K562 (cell line): ENCODE measurements at regions of chr1 and their contacts with region 1.

Region 1: DNA sequence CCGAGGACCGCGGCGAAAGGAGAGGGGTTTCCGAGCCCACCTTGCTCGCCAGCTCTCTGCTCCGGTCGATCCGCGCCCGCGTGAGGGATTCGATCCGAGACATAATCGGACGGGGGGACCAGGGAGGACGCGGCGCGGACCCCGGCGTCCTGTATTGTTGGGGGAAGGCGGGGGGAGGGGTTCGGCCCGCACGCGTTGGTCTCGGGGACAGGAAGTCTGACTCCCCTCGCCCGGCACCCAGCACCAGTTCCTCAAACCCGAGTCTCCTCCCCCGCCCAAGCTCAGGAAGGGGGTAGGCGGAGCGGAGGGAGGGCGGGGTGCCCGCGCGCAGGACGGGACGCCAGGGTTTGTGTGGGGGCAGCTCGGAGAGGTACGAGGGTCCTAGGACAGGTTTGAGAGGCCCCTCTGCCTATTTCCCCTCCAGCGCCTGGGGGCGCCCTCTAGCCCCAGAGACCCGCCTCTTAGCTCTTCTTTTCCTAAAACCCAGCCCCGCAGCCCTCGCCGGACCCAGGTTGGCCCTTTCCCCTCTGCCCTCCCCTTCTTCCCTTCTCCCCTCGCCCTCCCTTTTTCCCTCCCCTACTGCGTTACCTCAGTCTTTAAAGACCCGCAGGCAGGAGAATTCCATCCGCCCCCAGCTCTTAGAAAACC is at the start of gene ARHGEF2:
- DNase-seq: peak; percentile 88 to 91 (median 89)
- ATAC-seq: peak; percentile 65
- H3K4me3 ChIP-seq: peak within 1 kb of the TSS; percentile 82
- H3K27ac ChIP-seq: peak within 1 kb of the TSS; percentile 93
- H3K4me1 ChIP-seq: peaks cover 58 to 75% of the 10 kb centered on the region in 2 experiments
- H3K27me3 ChIP-seq: no peaks in the 10 kb centered on the region
- CTCF ChIP-seq: peak; percentile 30 to 42 (median 31); a peak in 4 of 6 replicates
- EP300 ChIP-seq: no peak
- POLR2A ChIP-seq: peak; percentile 78
- RAD21 ChIP-seq: peak in 1 of 2 experiments; percentile 22; a peak in 2 of 4 replicates
- polyA plus RNA-seq, gene ARHGEF2: 7.1 to 8.9 TPM

Region 2: GRCh38 chr1:155946633-155947219 is 31.7 kb before region 1 on chr1:
- CTCF ChIA-PET with region 1: no interaction called
- POLR2A ChIA-PET with region 1: interaction called, 50 read pairs
- in situ Hi-C with region 1: no loop called
- intact Hi-C with region 1: no loop called
- DNase-seq: no peak
- ATAC-seq: no peak
- H3K4me3 ChIP-seq: no peak overlapping the region
- H3K27ac ChIP-seq: no peak overlapping the region
- H3K4me1 ChIP-seq: peaks cover 0 to 10% of the 10 kb centered on the region in 2 experiments; a peak in 2 of 5 replicates
- H3K27me3 ChIP-seq: no peaks in the 10 kb centered on the region
- CTCF ChIP-seq: no peak
- EP300 ChIP-seq: no peak
- POLR2A ChIP-seq: no peak
- RAD21 ChIP-seq: no peak

Region 3: GRCh38 chr1:156054500-156055280 is 76.2 kb after region 1 on chr1 and contains the start of gene LAMTOR2:
- CTCF ChIA-PET with region 1: no interaction called
- POLR2A ChIA-PET with region 1: no interaction called
- in situ Hi-C with region 1: no loop called
- intact Hi-C with region 1: loop called (anchors 5 kb)
- DNase-seq: peak; percentile 81 to 99 (median 89)
- ATAC-seq: peak; percentile 87
- H3K4me3 ChIP-seq: peak within 1 kb of the TSS; percentile 64
- H3K27ac ChIP-seq: peak within 1 kb of the TSS; percentile 98
- H3K4me1 ChIP-seq: peaks cover 16 to 23% of the 10 kb centered on the region in 2 experiments; a peak in 4 of 5 replicates
- H3K27me3 ChIP-seq: no peaks in the 10 kb centered on the region
- CTCF ChIP-seq: peak in 1 of 3 experiments; percentile 17; a peak in 1 of 6 replicates
- EP300 ChIP-seq: no peak
- POLR2A ChIP-seq: peak; percentile 86
- RAD21 ChIP-seq: 0 out of 4 replicates have a peak, but pooled peaks of 1 of the 2 experiments have one; percentile 4
- polyA plus RNA-seq, gene LAMTOR2: 157 to 161 TPM